ENCODE measurements at regions of chrX and their contacts with region 1.

Region 1: GRCh38 chrX:134520860-134521390 is 61.0 kb downstream of the HPRT1 start:
- DNase-seq: peak; percentile 42
- CTCF ChIP-seq: peak; percentile 51

Region 2: GRCh38 chrX:134782796-134783195 is 261.9 kb after region 1 on chrX:
- CTCF ChIA-PET with region 1: interaction called, 16 read pairs
- POLR2A ChIA-PET with region 1: no interaction called
- DNase-seq: no peak
- CTCF ChIP-seq: peak; percentile 3